ENCODE measurements at regions of chr16 and their contacts with region 1.

Region 1: GRCh38 chr16:4957720-4958509 is at the start of gene SEC14L5:
- DNase-seq: peak; percentile 96
- H3K4me3 ChIP-seq: peak within 1 kb of the TSS; percentile 48
- H3K27ac ChIP-seq: no peak within 1 kb of the TSS
- H3K4me1 ChIP-seq: no peaks in the 10 kb centered on the region
- H3K27me3 ChIP-seq: peaks cover 35% of the 10 kb centered on the region
- CTCF ChIP-seq: no peak
- total RNA-seq, gene SEC14L5: 0.04 TPM in 1 of 2 replicates, not detected in the other

Region 2: DNA sequence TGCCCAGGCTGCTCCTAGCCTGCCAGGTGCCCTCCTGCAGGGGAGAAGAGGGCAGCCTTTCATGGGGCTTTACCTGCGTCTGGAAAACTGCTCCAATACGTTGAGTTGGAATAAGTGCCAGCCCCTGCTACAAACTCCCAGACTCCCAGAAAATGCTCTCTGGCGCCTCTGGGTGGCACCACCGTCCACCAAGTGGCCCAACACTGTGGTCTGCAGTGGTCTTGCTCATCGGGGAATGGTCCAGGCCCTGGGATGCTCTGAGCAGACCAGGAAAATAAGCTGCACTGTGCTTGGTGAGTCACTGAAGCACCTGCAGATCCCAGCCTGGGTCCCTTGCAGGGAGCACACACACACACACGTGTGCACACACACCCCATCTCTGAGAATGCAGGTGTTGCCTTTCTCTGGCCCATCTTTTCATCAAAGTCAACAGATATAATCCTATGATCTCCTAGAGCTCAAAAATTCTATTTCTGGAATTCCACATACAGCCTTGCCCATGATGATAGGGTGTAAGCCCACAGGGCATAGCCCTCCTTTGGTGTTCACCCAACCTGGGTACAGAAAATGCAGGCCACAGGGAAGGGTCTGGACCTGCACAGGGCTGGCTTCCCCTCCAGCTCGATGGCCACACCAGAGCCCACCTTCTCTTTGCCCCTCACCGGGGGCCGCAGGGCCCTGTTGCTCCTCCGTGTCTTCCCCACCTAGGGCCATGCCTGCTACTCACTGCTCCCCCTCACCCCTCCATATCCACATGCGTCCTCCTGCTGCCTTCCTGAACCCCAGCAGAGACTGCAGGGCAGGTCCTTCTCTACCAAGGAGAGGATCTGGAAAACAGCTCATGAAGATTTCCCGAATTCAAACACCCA is 439.9 kb before region 1 on chr16:
- CTCF ChIA-PET with region 1: interaction called, 3 read pairs
- POLR2A ChIA-PET with region 1: no interaction called
- intact Hi-C with region 1: loop called (anchors 5 kb)
- DNase-seq: peak; percentile 62
- H3K4me3 ChIP-seq: no peak overlapping the region
- H3K27ac ChIP-seq: no peak overlapping the region
- H3K4me1 ChIP-seq: peaks cover 26% of the 10 kb centered on the region
- H3K27me3 ChIP-seq: no peaks in the 10 kb centered on the region
- CTCF ChIP-seq: peak; percentile 66

Region 3: DNA sequence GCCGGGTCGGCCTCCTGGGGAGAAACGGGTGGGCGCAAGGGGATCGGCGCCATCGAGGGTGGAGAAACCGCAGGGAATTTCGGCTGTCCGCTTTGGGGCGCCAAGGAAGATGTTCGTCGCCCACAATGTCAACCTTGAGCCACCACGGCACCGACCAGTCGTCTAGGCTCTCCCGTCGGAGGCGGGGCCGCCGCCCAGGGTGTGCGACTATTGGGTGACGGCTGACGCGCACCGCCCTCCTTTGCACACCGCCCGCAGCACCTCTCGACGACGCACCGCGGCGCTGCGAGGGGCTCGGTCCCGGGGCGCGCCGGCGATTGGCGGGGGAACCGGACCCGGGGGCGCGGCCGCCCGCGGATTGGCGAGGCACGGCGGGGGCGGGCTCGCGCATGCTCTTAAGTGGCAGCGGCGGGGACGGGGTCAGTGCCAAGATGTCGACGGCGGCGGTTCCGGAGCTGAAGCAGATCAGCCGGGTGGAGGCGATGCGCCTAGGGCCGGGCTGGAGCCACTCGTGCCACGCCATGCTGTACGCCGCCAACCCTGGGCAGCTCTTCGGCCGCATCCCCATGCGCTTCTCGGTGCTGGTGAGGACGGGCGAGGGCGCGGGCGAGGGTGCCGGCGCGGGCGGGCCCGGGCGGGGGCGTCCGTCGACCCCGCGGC is 264.5 kb before region 1 on chr16 and contains the start of gene NUDT16L1:
- CTCF ChIA-PET with region 1: no interaction called
- POLR2A ChIA-PET with region 1: no interaction called
- intact Hi-C with region 1: loop called (anchors 10 kb)
- DNase-seq: peak; percentile 98
- H3K4me3 ChIP-seq: peak within 1 kb of the TSS; percentile 89
- H3K27ac ChIP-seq: peak within 1 kb of the TSS; percentile 92
- H3K4me1 ChIP-seq: peaks cover 4% of the 10 kb centered on the region
- H3K27me3 ChIP-seq: no peaks in the 10 kb centered on the region
- CTCF ChIP-seq: no peak
- total RNA-seq, gene NUDT16L1: 29.7 and 33.8 TPM in 2 replicates

Region 4: GRCh38 chr16:4987580-4988374 is 29.9 kb after region 1 on chr16:
- CTCF ChIA-PET with region 1: no interaction called
- POLR2A ChIA-PET with region 1: no interaction called
- intact Hi-C with region 1: no loop called
- DNase-seq: no peak
- H3K4me3 ChIP-seq: no peak overlapping the region
- H3K27ac ChIP-seq: no peak overlapping the region
- H3K4me1 ChIP-seq: no peaks in the 10 kb centered on the region
- H3K27me3 ChIP-seq: peaks cover 58% of the 10 kb centered on the region
- CTCF ChIP-seq: no peak

Measured in A673 (cell line).